ENCODE measurements at regions of chr3 and their contacts with region 1.

Region 1: DNA sequence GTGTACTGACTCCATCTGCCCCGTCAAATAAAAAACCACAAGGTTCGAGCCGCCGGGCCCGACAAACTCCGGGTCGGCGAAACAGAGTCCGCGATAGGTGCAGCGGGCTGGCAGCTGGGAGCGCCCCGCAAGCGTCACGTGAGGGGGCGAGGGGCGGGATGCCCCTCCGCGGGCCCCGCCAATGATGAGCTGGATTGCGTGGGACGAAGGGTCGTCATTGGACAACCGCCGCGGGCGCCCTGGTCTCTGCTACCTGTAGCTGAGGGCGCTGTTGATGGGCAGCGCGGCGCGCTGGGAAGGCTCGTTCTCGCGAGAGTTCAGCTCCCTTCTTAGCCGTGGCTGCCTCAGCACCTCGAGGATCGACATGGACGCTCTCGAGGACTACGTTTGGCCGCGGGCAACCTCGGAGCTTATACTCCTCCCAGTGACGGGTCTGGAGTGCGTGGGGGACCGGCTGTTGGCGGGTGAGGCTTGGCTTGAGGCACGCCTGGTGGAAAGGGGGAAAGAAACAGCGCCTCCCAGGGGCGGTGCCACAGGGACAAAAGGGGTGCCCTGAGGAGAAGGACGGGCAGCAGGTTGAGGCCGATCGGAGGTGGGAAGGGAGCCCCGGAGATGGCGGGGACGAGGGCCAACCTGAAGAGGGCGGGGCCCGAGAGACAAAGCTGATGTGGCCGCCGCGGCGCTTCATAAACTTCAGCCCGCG is at the start of gene WDR6:
- DNase-seq: peak; percentile 86 to 98 (median 96)
- ATAC-seq: peak; percentile 95
- H3K4me3 ChIP-seq: peak within 1 kb of the TSS; percentile 96
- H3K4me3 Mint-ChIP-seq: peak within 1 kb of the TSS; percentile 94 to 100 (median 98)
- H3K27ac ChIP-seq: peak within 1 kb of the TSS; percentile 90
- H3K27ac Mint-ChIP-seq: peak within 1 kb of the TSS; percentile 95 to 100 (median 98)
- H3K4me1 ChIP-seq: peaks cover 8 to 16% of the 10 kb centered on the region in 2 donors
- H3K4me1 Mint-ChIP-seq: peaks cover 14 to 34% (median 28%) of the 10 kb centered on the region in 7 donors
- H3K27me3 ChIP-seq: no peaks in the 10 kb centered on the region
- H3K27me3 Mint-ChIP-seq: no peaks in the 10 kb centered on the region
- total RNA-seq, gene WDR6: 170 to 335 (median 204) TPM

Region 2: GRCh38 chr3:48898383-48899234 is 108.6 kb before region 1 on chr3 and contains the start of gene SLC25A20:
- CTCF ChIA-PET with region 1: no interaction called
- POLR2A ChIA-PET with region 1: interaction called, 4 read pairs
- intact Hi-C with region 1: loop called in 1 of 2 experiments (anchors 1 kb)
- DNase-seq: peak; percentile 78 to 95 (median 85)
- ATAC-seq: peak; percentile 98
- H3K4me3 ChIP-seq: peak within 1 kb of the TSS; percentile 91
- H3K4me3 Mint-ChIP-seq: peak within 1 kb of the TSS; percentile 89 to 99 (median 94)
- H3K27ac ChIP-seq: peak within 1 kb of the TSS; percentile 76
- H3K27ac Mint-ChIP-seq: peak within 1 kb of the TSS; percentile 83 to 99 (median 93)
- H3K4me1 ChIP-seq: peaks cover 21 to 23% of the 10 kb centered on the region in 2 donors
- H3K4me1 Mint-ChIP-seq: peaks cover 27 to 51% (median 41%) of the 10 kb centered on the region in 7 donors
- H3K27me3 ChIP-seq: no peaks in the 10 kb centered on the region
- H3K27me3 Mint-ChIP-seq: no peaks in the 10 kb centered on the region
- total RNA-seq, gene SLC25A20: 6.6 to 27.3 (median 12.8) TPM

Region 3: DNA sequence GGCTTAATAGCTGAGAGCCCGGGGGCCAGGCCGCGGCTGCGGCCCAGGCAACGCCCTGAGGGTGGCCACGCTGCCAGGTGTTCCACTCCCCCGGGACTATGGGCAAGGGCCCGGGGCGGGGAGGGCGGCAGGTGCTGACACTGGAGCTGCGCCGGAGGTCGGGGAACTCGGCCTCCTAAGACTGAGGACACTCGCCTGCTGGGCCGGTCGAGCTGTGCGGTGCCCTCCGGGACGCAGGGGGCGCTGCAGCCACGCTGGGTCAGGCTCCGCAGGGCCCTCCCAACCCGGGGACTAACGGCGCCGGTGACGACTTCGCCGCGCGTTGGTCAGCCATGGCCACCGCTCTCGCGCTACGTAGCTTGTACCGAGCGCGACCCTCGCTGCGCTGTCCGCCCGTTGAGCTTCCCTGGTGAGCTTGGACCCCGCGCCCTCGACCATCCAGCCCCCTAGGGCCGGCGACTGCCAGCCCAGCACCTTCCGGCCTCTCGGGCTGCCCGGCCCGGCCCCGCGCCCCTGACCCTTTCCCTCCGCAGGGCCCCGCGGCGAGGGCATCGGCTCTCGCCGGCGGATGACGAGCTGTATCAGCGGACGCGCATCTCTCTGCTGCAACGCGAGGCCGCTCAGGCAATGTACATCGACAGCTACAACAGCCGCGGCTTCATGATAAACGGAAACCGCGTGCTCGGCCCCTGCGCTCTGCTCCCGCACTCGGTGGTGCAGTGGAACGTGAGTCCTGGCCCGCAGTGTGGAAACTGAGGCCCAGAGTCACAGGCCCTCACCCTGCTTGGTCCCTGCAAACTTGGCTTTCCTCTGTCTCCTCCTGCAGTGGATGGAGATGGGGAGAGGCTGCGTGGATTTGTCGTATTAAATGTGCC is 14.8 kb after region 1 on chr3 and contains the start of gene NDUFAF3:
- CTCF ChIA-PET with region 1: interaction called, 25 read pairs
- POLR2A ChIA-PET with region 1: interaction called, 247 read pairs
- intact Hi-C with region 1: loop called (anchors 1 kb)
- DNase-seq: peak; percentile 84 to 96 (median 89)
- ATAC-seq: peak; percentile 89
- H3K4me3 ChIP-seq: peak within 1 kb of the TSS; percentile 99
- H3K4me3 Mint-ChIP-seq: peak within 1 kb of the TSS; percentile 92 to 99 (median 97)
- H3K27ac ChIP-seq: peak within 1 kb of the TSS; percentile 98
- H3K27ac Mint-ChIP-seq: peak within 1 kb of the TSS; percentile 95 to 99 (median 98)
- H3K4me1 ChIP-seq: peaks cover 24 to 25% of the 10 kb centered on the region in 2 donors
- H3K4me1 Mint-ChIP-seq: peaks cover 21 to 61% (median 47%) of the 10 kb centered on the region in 7 donors
- H3K27me3 ChIP-seq: no peaks in the 10 kb centered on the region
- H3K27me3 Mint-ChIP-seq: peaks cover 0 to 2% (median 0%) of the 10 kb centered on the region in 5 donors
- total RNA-seq, gene NDUFAF3: 63.8 to 110 (median 89.3) TPM

Region 4: GRCh38 chr3:49158108-49158709 is 151.0 kb after region 1 on chr3:
- CTCF ChIA-PET with region 1: no interaction called
- POLR2A ChIA-PET with region 1: no interaction called
- intact Hi-C with region 1: loop called in 1 of 2 experiments (anchors 1 kb)
- DNase-seq: peak in 8 of 9 donors; percentile 40 to 68 (median 59)
- ATAC-seq: peak; percentile 89
- H3K4me3 ChIP-seq: no peak overlapping the region
- H3K4me3 Mint-ChIP-seq: no peak overlapping the region
- H3K27ac ChIP-seq: peak overlapping the region; percentile 20
- H3K27ac Mint-ChIP-seq: peak overlapping the region in 6 of 9 donors; percentile 3 to 82 (median 18)
- H3K4me1 ChIP-seq: no peaks in the 10 kb centered on the region
- H3K4me1 Mint-ChIP-seq: peaks cover 0 to 10% (median 5%) of the 10 kb centered on the region in 7 donors
- H3K27me3 ChIP-seq: no peaks in the 10 kb centered on the region
- H3K27me3 Mint-ChIP-seq: no peaks in the 10 kb centered on the region

Region 5: GRCh38 chr3:49428697-49429100 is 421.5 kb after region 1 on chr3:
- CTCF ChIA-PET with region 1: no interaction called
- POLR2A ChIA-PET with region 1: interaction called, 3 read pairs
- intact Hi-C with region 1: loop called in 1 of 2 experiments (anchors 5 kb)
- DNase-seq: peak in 1 of 9 donors; percentile 13
- ATAC-seq: no peak
- H3K4me3 ChIP-seq: peak overlapping the region; percentile 84
- H3K4me3 Mint-ChIP-seq: peak overlapping the region; percentile 88 to 98 (median 94)
- H3K27ac ChIP-seq: peak overlapping the region; percentile 83
- H3K27ac Mint-ChIP-seq: peak overlapping the region; percentile 49 to 96 (median 94)
- H3K4me1 ChIP-seq: peaks cover 0 to 5% of the 10 kb centered on the region in 2 donors
- H3K4me1 Mint-ChIP-seq: peaks cover 17 to 37% (median 28%) of the 10 kb centered on the region in 7 donors
- H3K27me3 ChIP-seq: no peaks in the 10 kb centered on the region
- H3K27me3 Mint-ChIP-seq: no peaks in the 10 kb centered on the region

Region 6: DNA sequence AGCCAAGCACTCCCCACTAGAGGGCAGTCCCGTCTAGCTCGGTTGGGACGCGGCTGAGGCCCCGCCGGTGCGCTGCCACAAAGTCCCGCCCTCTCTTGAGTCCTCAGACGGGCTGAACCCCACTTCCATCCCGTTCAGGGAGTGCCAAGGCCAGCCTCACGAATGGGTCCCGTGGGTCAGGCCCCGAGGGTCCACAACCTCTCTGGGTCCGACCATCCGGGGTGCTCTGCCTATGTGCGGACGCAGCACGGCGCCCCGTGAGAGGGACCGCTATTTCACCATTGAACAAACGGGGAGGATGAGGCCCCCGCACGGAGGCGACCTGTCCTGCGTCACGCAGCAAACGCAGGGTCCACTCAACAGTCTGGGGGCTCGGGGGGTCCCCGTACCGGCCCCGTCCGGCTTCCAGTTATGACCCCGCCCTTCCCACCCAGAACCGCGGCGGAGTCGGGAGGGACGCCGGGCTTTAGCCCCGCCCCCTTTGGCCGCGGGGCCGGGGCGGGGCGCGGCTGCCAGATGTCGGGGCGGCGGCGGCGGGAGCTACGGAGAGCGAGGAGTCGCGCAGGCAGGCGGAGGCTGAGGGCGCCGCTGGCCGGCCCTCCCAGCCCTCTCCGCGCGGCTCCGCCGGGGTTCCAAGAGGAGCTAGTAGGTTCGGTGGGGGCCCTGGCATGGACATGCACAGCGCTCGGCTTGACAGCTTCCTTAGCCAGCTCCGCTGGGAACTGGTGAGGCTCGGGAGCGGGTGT is 795.7 kb after region 1 on chr3 and contains the start of gene INKA1:
- CTCF ChIA-PET with region 1: no interaction called
- POLR2A ChIA-PET with region 1: no interaction called
- intact Hi-C with region 1: no loop called
- DNase-seq: peak; percentile 77 to 89 (median 87)
- ATAC-seq: peak; percentile 93
- H3K4me3 ChIP-seq: peak within 1 kb of the TSS; percentile 89
- H3K4me3 Mint-ChIP-seq: peak within 1 kb of the TSS; percentile 82 to 95 (median 90)
- H3K27ac ChIP-seq: peak within 1 kb of the TSS; percentile 84
- H3K27ac Mint-ChIP-seq: peak within 1 kb of the TSS; percentile 80 to 96 (median 91)
- H3K4me1 ChIP-seq: peaks cover 11 to 41% of the 10 kb centered on the region in 2 donors
- H3K4me1 Mint-ChIP-seq: peaks cover 23 to 47% (median 41%) of the 10 kb centered on the region in 7 donors
- H3K27me3 ChIP-seq: no peaks in the 10 kb centered on the region
- H3K27me3 Mint-ChIP-seq: peaks cover 0 to 20% (median 0%) of the 10 kb centered on the region in 5 donors
- total RNA-seq, gene INKA1: 0.65 to 2.2 (median 1.8) TPM

Measured in naive thymus-derived CD4-positive, alpha-beta T cell (primary cell).